Left ventricle myocardium superior (tissue), 1 donor: ENCODE measurements at regions of chr22 and their contacts with region 1.

Region 1: GRCh38 chr22:30089655-30089974 is 9.4 kb downstream of the HORMAD2 start:
- DNase-seq: no peak
- ATAC-seq: no peak

Region 2: GRCh38 chr22:29635734-29636357 is 453.8 kb before region 1 on chr22:
- intact Hi-C with region 1: loop called (anchors 5 kb)
- DNase-seq: no peak
- ATAC-seq: peak; percentile 53